Dorsolateral prefrontal cortex (tissue), 120 donors: ENCODE measurements at regions of chr3 and their contacts with region 1.

Region 1: GRCh38 chr3:122793568-122794416 is at the start of gene HSPBAP1:
- DNase-seq: peak; percentile 89 to 95 (median 94)
- H3K4me3 ChIP-seq: peak within 1 kb of the TSS; percentile 62 to 96 (median 87)
- H3K27ac ChIP-seq: peak within 1 kb of the TSS; percentile 0 to 96 (median 87)
- H3K27me3 ChIP-seq: no peaks in the 10 kb centered on the region
- CTCF ChIP-seq: peak in 13 of 56 donors; percentile 7 to 49 (median 20)
- total RNA-seq, gene HSPBAP1: 8.8 to 21.7 (median 14.3) TPM

Region 2: GRCh38 chr3:121834696-121835464 is 958.9 kb before region 1 on chr3 and contains the starts of genes EAF2 and IQCB1:
- intact Hi-C with region 1: loop called in 1 of 2 experiments (anchors 10 kb)
- DNase-seq: peak; percentile 88 to 98 (median 96)
- H3K4me3 ChIP-seq: peak within 1 kb of the TSS; percentile 44 to 96 (median 84)
- H3K27ac ChIP-seq: peak within 1 kb of the TSS in 41 of 59 donors; percentile 5 to 88 (median 56)
- H3K27me3 ChIP-seq: no peaks in the 10 kb centered on the region
- CTCF ChIP-seq: peak in 38 of 56 donors; percentile 4 to 57 (median 33)
- total RNA-seq, gene EAF2: 8.6 to 27.8 (median 18.3) TPM
- total RNA-seq, gene IQCB1: 13.0 to 33.0 (median 21.6) TPM

Region 3: GRCh38 chr3:122067214-122067550 is 726.6 kb before region 1 on chr3:
- intact Hi-C with region 1: no loop called
- DNase-seq: no peak
- H3K4me3 ChIP-seq: no peak overlapping the region
- H3K27ac ChIP-seq: peak overlapping the region in 2 of 59 donors; percentile 5 to 18
- H3K27me3 ChIP-seq: no peaks in the 10 kb centered on the region
- CTCF ChIP-seq: no peak

Region 4: DNA sequence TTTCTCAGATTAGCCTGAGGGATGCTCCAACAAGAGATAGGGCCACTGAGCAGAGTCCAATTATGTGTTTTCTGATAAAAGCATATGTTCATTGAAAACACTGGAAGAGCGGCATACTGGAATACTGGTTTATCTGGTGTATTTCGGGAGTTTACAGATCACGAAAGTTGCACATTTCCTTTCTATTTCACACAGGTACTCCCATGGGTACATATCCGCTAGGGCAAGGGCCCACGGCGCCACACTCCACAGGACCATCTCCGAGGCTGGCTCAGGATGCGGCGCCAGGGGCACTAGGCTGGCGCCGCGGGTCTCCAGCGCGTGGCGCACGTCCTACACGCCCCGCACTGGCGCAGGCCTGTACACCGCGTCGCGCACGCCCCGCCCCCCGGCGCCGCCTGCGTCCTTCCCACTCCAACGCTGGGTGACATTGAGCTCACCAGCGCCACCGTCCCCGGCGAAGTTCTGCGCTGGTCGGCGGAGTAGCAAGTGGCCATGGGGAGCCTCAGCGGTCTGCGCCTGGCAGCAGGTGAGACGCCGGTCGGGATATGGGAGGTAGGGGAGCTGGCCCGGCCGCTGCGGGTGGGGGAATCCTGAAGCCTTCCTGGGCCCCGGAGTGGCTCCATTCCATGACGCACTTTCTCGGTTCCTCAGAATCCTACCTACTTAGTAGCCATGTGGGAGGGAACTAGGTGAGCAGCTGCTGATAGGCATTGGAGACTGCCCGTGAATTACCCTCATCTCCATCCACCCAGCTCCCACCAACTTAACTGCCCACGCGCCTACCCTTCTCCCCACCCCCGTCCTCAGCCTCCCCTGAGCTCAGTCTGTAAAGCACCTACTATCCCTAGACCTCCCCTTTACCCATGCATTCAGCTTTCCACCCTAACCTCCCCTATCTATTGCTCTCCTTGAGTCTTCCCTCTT is 409.8 kb before region 1 on chr3 and contains the start of gene FAM162A:
- intact Hi-C with region 1: loop called (anchors 10 kb)
- DNase-seq: peak; percentile 89 to 97 (median 94)
- H3K4me3 ChIP-seq: peak within 1 kb of the TSS; percentile 52 to 97 (median 83)
- H3K27ac ChIP-seq: peak within 1 kb of the TSS; percentile 74 to 97 (median 91)
- H3K27me3 ChIP-seq: no peaks in the 10 kb centered on the region
- CTCF ChIP-seq: peak; percentile 54 to 95 (median 85)
- total RNA-seq, gene FAM162A: 26.1 to 101 (median 59.2) TPM

Region 5: GRCh38 chr3:122415720-122416654 is 377.8 kb before region 1 on chr3 and contains the start of gene WDR5B:
- intact Hi-C with region 1: loop called (anchors 10 kb)
- DNase-seq: peak; percentile 95 to 98 (median 98)
- H3K4me3 ChIP-seq: peak within 1 kb of the TSS; percentile 48 to 98 (median 86)
- H3K27ac ChIP-seq: peak within 1 kb of the TSS; percentile 47 to 98 (median 91)
- H3K27me3 ChIP-seq: no peaks in the 10 kb centered on the region
- CTCF ChIP-seq: peak in 35 of 56 donors; percentile 9 to 58 (median 29)
- total RNA-seq, gene WDR5B: 1.2 to 7.1 (median 3.7) TPM

Region 6: GRCh38 chr3:122514123-122515019 is 279.4 kb before region 1 on chr3 and contains the start of gene KPNA1:
- intact Hi-C with region 1: loop called in 1 of 2 experiments (anchors 10 kb)
- DNase-seq: peak; percentile 72 to 95 (median 84)
- H3K4me3 ChIP-seq: peak within 1 kb of the TSS; percentile 62 to 92 (median 83)
- H3K27ac ChIP-seq: peak within 1 kb of the TSS; percentile 51 to 99 (median 93)
- H3K27me3 ChIP-seq: no peaks in the 10 kb centered on the region
- CTCF ChIP-seq: peak in 27 of 56 donors; percentile 4 to 53 (median 25)
- total RNA-seq, gene KPNA1: 54.6 to 126 (median 91.1) TPM

Region 7: DNA sequence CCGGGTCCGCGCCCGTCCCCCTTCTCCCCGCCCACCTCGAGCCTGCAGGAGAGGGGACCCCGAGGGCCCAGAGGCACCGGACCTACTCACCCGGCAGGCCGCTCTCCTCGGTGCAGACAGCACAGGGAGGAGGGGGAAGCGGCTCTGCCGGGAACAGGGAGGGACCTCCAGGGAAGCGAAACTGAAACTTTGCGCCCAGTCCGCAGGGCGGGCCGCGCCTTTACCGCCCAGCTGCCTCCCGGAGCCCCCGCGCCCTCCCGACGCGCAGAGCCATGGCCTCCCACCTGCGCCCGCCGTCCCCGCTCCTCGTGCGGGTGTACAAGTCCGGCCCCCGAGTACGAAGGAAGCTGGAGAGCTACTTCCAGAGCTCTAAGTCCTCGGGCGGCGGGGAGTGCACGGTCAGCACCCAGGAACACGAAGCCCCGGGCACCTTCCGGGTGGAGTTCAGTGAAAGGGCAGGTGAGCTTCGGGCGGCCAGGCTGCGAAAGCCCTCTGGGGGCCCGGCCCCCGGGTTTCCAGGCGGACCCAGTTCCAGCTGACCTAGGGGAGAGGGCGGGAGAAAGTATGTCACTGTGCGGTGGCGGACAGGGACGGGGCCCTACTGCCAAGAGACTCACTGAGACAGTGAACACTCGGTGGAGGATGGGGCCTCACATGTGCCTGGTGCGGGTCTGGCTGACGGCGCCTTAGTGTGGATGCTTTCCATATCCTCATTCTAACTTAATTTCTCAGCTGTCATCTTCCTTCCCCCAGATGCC is 229.5 kb before region 1 on chr3 and contains the starts of genes DTX3L and PARP9:
- intact Hi-C with region 1: loop called in 1 of 2 experiments (anchors 10 kb)
- DNase-seq: peak; percentile 11 to 79 (median 58)
- H3K4me3 ChIP-seq: peak within 1 kb of the TSS; percentile 62 to 98 (median 84)
- H3K27ac ChIP-seq: peak within 1 kb of the TSS; percentile 4 to 95 (median 83)
- H3K27me3 ChIP-seq: no peaks in the 10 kb centered on the region
- CTCF ChIP-seq: peak in 4 of 56 donors; percentile 2 to 30 (median 9)
- total RNA-seq, gene DTX3L: 2.9 to 28.9 (median 9.0) TPM
- total RNA-seq, gene PARP9: 4.7 to 38.4 (median 11.6) TPM

Region 8: GRCh38 chr3:123028233-123028828 is 234.5 kb after region 1 on chr3:
- intact Hi-C with region 1: loop called in 1 of 2 experiments (anchors 10 kb)
- DNase-seq: peak in 8 of 10 donors; percentile 25 to 46 (median 40)
- H3K4me3 ChIP-seq: peak overlapping the region; percentile 48 to 80 (median 69)
- H3K27ac ChIP-seq: peak overlapping the region in 34 of 59 donors; percentile 2 to 77 (median 48)
- H3K27me3 ChIP-seq: peaks cover 0 to 34% (median 0%) of the 10 kb centered on the region in 45 donors
- CTCF ChIP-seq: peak in 55 of 56 donors; percentile 46 to 81 (median 65)